AG04450 (cell line): ENCODE measurements at regions of chr21 and their contacts with region 1.

Region 1: GRCh38 chr21:38306433-38307141 is 49.8 kb downstream of the KCNJ15 start:
- DNase-seq: peak; percentile 93
- H3K4me3 ChIP-seq: no peak overlapping the region
- H3K27ac ChIP-seq: peak overlapping the region; percentile 81
- H3K27me3 ChIP-seq: no peaks in the 10 kb centered on the region
- CTCF ChIP-seq: no peak

Region 2: DNA sequence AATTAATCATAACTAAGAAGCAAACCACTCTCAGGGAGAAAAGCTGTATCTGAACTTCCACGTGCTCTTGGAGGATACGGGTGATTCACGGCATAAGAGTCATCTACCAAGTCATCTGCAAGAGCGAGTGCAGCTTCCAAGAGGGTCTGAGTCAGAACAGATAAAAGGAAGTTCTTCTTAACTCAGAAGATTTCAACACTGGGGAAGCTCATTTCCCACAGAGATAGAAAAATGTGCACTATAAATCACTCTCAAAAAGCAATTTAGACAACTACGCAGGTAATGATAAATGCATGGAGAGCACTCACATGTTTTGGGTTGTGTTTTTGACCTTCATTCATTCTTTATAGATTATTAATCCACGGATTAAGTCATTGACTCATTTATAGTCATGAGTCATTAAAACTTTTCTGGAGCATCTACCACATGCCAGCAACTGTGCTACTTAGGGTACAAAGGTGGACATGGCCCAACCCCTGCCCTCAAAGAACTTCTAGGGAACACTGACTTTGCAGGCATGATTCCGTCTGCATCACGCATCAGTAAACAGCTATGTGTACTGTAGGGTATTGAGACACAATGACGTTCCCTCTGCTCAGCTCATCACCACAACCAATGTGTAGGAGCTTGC is 29.0 kb before region 1 on chr21:
- CTCF ChIA-PET with region 1: no interaction called
- POLR2A ChIA-PET with region 1: interaction called, 13 read pairs
- DNase-seq: peak; percentile 95
- H3K4me3 ChIP-seq: no peak overlapping the region
- H3K27ac ChIP-seq: peak overlapping the region; percentile 77
- H3K27me3 ChIP-seq: no peaks in the 10 kb centered on the region
- CTCF ChIP-seq: no peak

Region 3: DNA sequence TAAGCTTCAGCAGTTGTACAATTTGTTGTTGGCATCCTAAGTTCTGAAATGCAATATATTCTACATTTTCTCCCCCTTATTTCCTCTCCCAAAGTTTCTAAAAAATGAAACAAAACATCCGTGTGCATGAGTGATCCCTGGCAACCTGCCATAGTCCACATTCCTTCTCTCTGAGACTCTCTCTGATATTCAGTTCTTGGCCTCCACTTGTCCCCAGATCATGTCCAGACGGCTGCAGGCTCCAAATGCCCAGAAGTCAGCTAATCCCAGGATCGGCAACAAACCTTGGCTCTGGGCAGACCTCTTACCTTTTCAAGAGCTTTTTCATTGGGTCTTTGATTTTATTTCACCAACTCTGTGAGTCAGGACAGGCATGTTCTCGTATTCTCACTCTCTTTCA is 687.0 kb after region 1 on chr21:
- CTCF ChIA-PET with region 1: no interaction called
- POLR2A ChIA-PET with region 1: no interaction called
- DNase-seq: peak; percentile 68
- H3K4me3 ChIP-seq: no peak overlapping the region
- H3K27ac ChIP-seq: peak overlapping the region; percentile 31
- H3K27me3 ChIP-seq: no peaks in the 10 kb centered on the region
- CTCF ChIP-seq: no peak